Ascending aorta (tissue), 2 donors: ENCODE measurements at regions of chr22 and their contacts with region 1.

Region 1: DNA sequence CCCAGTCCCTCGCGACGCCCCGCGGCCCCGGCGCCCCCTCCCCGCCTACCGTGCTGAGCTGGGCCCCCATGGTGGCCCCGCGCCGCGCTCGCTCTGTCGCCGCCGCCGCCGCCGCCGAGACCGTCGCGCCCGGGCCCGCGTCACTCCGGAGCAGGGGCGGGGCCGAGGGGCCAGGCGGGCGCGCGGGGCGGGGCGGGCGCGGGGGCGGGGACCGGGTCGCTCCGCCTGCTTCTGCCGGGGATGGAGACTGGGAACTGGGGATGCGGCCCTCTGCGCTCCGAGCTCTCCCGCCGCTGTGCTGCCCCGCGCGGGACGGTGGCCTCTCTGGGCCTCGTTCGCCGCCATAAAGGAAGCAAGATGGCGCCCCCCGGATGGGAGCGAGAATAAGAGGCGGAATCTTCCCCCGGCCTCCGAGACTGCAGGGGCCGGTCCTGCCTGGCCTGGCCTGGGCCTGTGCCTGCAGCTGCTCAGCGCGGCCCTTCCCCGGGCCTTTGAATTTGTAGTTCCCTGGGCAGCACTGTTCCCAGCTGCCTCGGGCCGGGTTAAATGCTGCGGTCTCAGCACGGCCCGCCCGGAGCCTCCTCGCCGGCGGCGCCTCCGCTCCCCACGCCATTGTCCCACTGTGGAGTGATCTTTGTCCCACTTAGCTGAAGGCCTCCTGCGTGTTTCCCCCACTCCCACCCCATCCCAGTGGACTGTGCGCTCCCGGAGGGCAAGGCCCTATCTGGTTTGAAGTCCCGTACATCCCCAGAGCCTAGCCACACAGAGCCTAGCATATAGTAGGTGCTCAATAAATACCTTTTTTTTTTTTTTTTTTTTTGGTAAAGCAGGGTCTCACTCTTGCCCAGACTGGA is at the start of gene CYB5R3:
- DNase-seq: peak; percentile 26 to 90
- H3K4me3 ChIP-seq: peak within 1 kb of the TSS; percentile 74 to 97
- H3K27ac ChIP-seq: peak within 1 kb of the TSS; percentile 95 to 98
- H3K4me1 ChIP-seq: peaks cover 14 to 39% of the 10 kb centered on the region in 2 donors
- H3K27me3 ChIP-seq: no peaks in the 10 kb centered on the region
- CTCF ChIP-seq: peak in 2 of 3 experiments; percentile 9 to 10
- total RNA-seq, gene CYB5R3: 455 TPM

Region 2: GRCh38 chr22:42528258-42528948 is 121.1 kb before region 1 on chr22:
- intact Hi-C with region 1: no loop called
- DNase-seq: no peak
- H3K4me3 ChIP-seq: no peak overlapping the region
- H3K27ac ChIP-seq: no peak overlapping the region
- H3K4me1 ChIP-seq: no peaks in the 10 kb centered on the region
- H3K27me3 ChIP-seq: no peaks in the 10 kb centered on the region
- CTCF ChIP-seq: no peak

Region 3: GRCh38 chr22:42621505-42622002 is 27.9 kb before region 1 on chr22:
- intact Hi-C with region 1: loop called (anchors 1 kb)
- DNase-seq: peak in 1 of 2 donors; percentile 86
- H3K4me3 ChIP-seq: peak overlapping the region in 1 of 2 donors; percentile 4
- H3K27ac ChIP-seq: peak overlapping the region; percentile 85
- H3K4me1 ChIP-seq: peaks cover 11 to 28% of the 10 kb centered on the region in 2 donors
- H3K27me3 ChIP-seq: no peaks in the 10 kb centered on the region
- CTCF ChIP-seq: peak; percentile 76 to 80 (median 79)

Region 4: GRCh38 chr22:42635531-42635930 is 13.9 kb before region 1 on chr22:
- intact Hi-C with region 1: no loop called
- DNase-seq: peak; percentile 80 to 98
- H3K4me3 ChIP-seq: no peak overlapping the region
- H3K27ac ChIP-seq: peak overlapping the region; percentile 91 to 93
- H3K4me1 ChIP-seq: peaks cover 16 to 28% of the 10 kb centered on the region in 2 donors
- H3K27me3 ChIP-seq: no peaks in the 10 kb centered on the region
- CTCF ChIP-seq: no peak

Region 5: GRCh38 chr22:42856865-42857704 is 207.6 kb after region 1 on chr22 and contains the start of gene ARFGAP3:
- intact Hi-C with region 1: loop called (anchors 5 kb)
- DNase-seq: peak; percentile 65 to 96
- H3K4me3 ChIP-seq: peak within 1 kb of the TSS; percentile 68 to 96
- H3K27ac ChIP-seq: peak within 1 kb of the TSS; percentile 94 to 99
- H3K4me1 ChIP-seq: peaks cover 8 to 21% of the 10 kb centered on the region in 2 donors
- H3K27me3 ChIP-seq: no peaks in the 10 kb centered on the region
- CTCF ChIP-seq: peak in 1 of 3 experiments; percentile 6
- total RNA-seq, gene ARFGAP3: 21.6 TPM

Region 6: GRCh38 chr22:42994881-42995562 is 345.5 kb after region 1 on chr22:
- intact Hi-C with region 1: loop called (anchors 10 kb)
- DNase-seq: peak in 1 of 2 donors; percentile 92
- H3K4me3 ChIP-seq: peak overlapping the region; percentile 51 to 64
- H3K27ac ChIP-seq: peak overlapping the region; percentile 93
- H3K4me1 ChIP-seq: peaks cover 38 to 86% of the 10 kb centered on the region in 2 donors
- H3K27me3 ChIP-seq: no peaks in the 10 kb centered on the region
- CTCF ChIP-seq: no peak

Region 7: DNA sequence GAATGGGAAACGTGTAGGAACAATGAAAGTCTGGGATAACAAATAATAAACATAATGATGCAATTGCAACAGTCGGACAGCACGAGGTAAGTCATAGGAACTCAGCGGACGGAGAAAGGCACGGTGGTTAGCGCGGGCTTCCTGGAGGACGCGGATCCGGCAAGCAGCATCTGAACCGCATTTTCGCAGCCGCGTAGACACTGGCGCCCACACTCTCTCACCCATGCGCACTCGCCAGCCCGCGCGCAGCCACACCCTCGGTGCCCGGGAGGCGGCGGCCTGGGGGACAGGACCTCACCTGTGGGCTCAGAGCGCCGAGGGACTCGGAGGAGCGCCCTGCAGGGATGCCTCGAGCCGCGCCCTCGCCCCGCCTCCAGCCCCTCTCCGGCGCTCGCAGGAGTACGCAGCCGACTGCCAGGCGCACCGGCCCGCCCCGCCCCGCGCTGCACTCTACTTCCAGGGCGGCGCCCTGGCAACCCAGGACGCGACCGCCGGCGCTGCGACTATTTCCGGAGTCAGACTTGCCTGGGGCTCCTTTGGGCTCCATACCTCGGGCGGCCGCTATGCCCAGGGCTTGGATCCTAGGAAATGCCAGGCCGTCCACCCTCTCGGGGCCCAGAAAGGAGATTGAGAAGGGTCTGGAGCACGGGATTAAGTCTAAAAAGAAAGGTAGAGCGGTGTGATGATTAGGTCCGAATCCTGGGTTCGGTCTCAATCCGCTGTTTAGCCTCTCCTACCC is 439.7 kb after region 1 on chr22 and contains the start of gene TTLL1:
- intact Hi-C with region 1: loop called (anchors 10 kb)
- DNase-seq: peak; percentile 36 to 91
- H3K4me3 ChIP-seq: peak within 1 kb of the TSS; percentile 61 to 85
- H3K27ac ChIP-seq: no peak within 1 kb of the TSS
- H3K4me1 ChIP-seq: no peaks in the 10 kb centered on the region
- H3K27me3 ChIP-seq: no peaks in the 10 kb centered on the region
- CTCF ChIP-seq: no peak
- total RNA-seq, gene TTLL1: 0.21 TPM